ENCODE measurements at regions of chr2 and their contacts with region 1.

Region 1: GRCh38 chr2:7766088-7766722 is 849.0 kb downstream of the RNF144A start:
- DNase-seq: no peak
- H3K4me3 ChIP-seq: no peak overlapping the region
- H3K27ac ChIP-seq: peak overlapping the region in 3 of 4 donors; percentile 80 to 89 (median 84)
- H3K4me1 ChIP-seq: peaks cover 0 to 39% (median 22%) of the 10 kb centered on the region in 4 donors
- H3K27me3 ChIP-seq: no peaks in the 10 kb centered on the region
- CTCF ChIP-seq: no peak
- EP300 ChIP-seq: no peak
- POLR2A ChIP-seq: no peak

Region 2: GRCh38 chr2:7437716-7438632 is 328.2 kb before region 1 on chr2:
- intact Hi-C with region 1: loop called (anchors 2 kb)
- DNase-seq: no peak
- H3K4me3 ChIP-seq: no peak overlapping the region
- H3K27ac ChIP-seq: peak overlapping the region in 3 of 4 donors; percentile 68 to 75 (median 69)
- H3K4me1 ChIP-seq: peaks cover 0 to 32% (median 19%) of the 10 kb centered on the region in 4 donors
- H3K27me3 ChIP-seq: no peaks in the 10 kb centered on the region
- CTCF ChIP-seq: no peak
- EP300 ChIP-seq: no peak
- POLR2A ChIP-seq: no peak

Region 3: GRCh38 chr2:8004250-8004681 is 238.1 kb after region 1 on chr2:
- intact Hi-C with region 1: loop called (anchors 5 kb)
- DNase-seq: peak; percentile 84
- H3K4me3 ChIP-seq: peak overlapping the region in 2 of 4 donors; percentile 8 to 22
- H3K27ac ChIP-seq: peak overlapping the region; percentile 58 to 84 (median 77)
- H3K4me1 ChIP-seq: peaks cover 0 to 18% (median 14%) of the 10 kb centered on the region in 4 donors
- H3K27me3 ChIP-seq: no peaks in the 10 kb centered on the region
- CTCF ChIP-seq: no peak
- EP300 ChIP-seq: peak in 3 of 4 donors; percentile 18 to 83 (median 62)
- POLR2A ChIP-seq: no peak

Region 4: GRCh38 chr2:8162552-8162951 is 396.3 kb after region 1 on chr2:
- intact Hi-C with region 1: loop called (anchors 5 kb)
- DNase-seq: peak; percentile 94
- H3K4me3 ChIP-seq: no peak overlapping the region
- H3K27ac ChIP-seq: peak overlapping the region; percentile 21 to 85 (median 82)
- H3K4me1 ChIP-seq: peaks cover 0 to 36% (median 18%) of the 10 kb centered on the region in 4 donors
- H3K27me3 ChIP-seq: no peaks in the 10 kb centered on the region
- CTCF ChIP-seq: no peak
- EP300 ChIP-seq: peak; percentile 78 to 88 (median 82)
- POLR2A ChIP-seq: no peak

Region 5: GRCh38 chr2:8676191-8676920 is 910.2 kb after region 1 on chr2:
- intact Hi-C with region 1: loop called (anchors 1 kb)
- DNase-seq: peak; percentile 96
- H3K4me3 ChIP-seq: peak overlapping the region; percentile 27 to 80 (median 67)
- H3K27ac ChIP-seq: peak overlapping the region; percentile 90 to 99 (median 98)
- H3K4me1 ChIP-seq: peaks cover 0 to 49% (median 32%) of the 10 kb centered on the region in 4 donors
- H3K27me3 ChIP-seq: no peaks in the 10 kb centered on the region
- CTCF ChIP-seq: no peak
- EP300 ChIP-seq: no peak
- POLR2A ChIP-seq: peak; percentile 35 to 40

Measured in sigmoid colon (tissue), 7 donors.